Testis (tissue), 5 donors: ENCODE measurements at regions of chr17 and their contacts with region 1.

Region 1: GRCh38 chr17:75904749-75905521 is at the start of gene MRPL38:
- DNase-seq: peak; percentile 94
- H3K4me3 ChIP-seq: peak within 1 kb of the TSS; percentile 81 to 82
- H3K27ac ChIP-seq: peak within 1 kb of the TSS; percentile 75 to 82
- H3K4me1 ChIP-seq: peaks cover 9% of the 10 kb centered on the region
- H3K27me3 ChIP-seq: no peaks in the 10 kb centered on the region
- CTCF ChIP-seq: peak; percentile 99 to 100 (median 100)
- POLR2A ChIP-seq: no peak
- total RNA-seq, gene MRPL38: 88.2 to 88.7 TPM

Region 2: GRCh38 chr17:75753514-75754377 is 151.2 kb before region 1 on chr17:
- intact Hi-C with region 1: no loop called
- DNase-seq: peak; percentile 69
- H3K4me3 ChIP-seq: peak overlapping the region; percentile 48 to 50
- H3K27ac ChIP-seq: peak overlapping the region; percentile 27 to 63
- H3K4me1 ChIP-seq: peaks cover 22% of the 10 kb centered on the region
- H3K27me3 ChIP-seq: no peaks in the 10 kb centered on the region
- CTCF ChIP-seq: peak; percentile 31 to 67 (median 65)
- POLR2A ChIP-seq: no peak

Region 3: DNA sequence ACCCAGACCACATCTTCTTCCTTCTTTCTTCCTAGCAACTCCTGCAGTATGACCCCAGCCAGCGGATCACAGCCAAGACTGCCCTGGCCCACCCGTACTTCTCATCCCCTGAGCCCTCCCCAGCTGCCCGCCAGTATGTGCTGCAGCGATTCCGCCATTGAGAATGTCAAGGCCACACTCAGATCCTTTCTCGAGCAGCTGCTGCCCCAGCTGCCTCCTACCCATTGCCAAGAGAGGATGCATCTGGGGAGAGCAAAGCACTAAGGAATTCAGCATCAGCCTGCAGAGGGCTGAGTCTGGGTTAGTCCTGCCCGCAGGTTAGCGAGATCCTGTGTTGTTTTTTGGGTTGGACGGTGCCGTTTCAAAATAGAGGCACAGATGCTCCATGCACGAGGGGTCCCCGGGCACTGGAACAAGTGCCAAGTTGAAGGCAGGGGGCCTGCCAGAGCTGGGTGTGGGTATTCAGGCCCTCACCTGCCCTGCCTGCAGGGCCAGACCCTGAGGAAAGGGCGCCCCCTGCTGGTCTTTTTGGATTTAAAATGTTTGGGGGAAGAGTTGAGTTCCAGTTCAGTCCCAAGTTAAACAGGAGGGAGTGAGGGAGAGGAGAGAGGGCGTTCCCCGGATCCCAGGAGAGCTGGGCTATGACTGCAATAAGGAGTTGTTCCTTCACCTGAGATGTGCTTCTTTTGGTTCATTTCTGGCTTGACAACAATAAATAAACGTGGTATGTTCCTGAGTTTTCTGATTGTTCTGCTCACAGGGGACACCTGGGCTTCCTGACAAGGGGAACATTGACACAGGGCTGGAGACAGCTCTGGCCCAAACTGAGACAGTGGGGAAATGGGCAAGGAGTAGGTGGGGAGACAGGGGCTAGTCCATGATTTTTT is 100.6 kb after region 1 on chr17:
- intact Hi-C with region 1: loop called (anchors 2 kb)
- DNase-seq: peak; percentile 88
- H3K4me3 ChIP-seq: no peak overlapping the region
- H3K27ac ChIP-seq: peak overlapping the region; percentile 22 to 78
- H3K4me1 ChIP-seq: peaks cover 36% of the 10 kb centered on the region
- H3K27me3 ChIP-seq: no peaks in the 10 kb centered on the region
- CTCF ChIP-seq: peak; percentile 91 to 95 (median 95)
- POLR2A ChIP-seq: no peak